H1 (cell line): ENCODE measurements at regions of chr9 and their contacts with region 1.

Region 1: GRCh38 chr9:69307446-69308216 is 17.4 kb upstream of the ENTREP1 start:
- DNase-seq: peak; percentile 58 to 62
- H3K4me3 ChIP-seq: peak overlapping the region in 1 of 4 experiments; percentile 19; a peak in 1 of 8 replicates
- H3K27ac ChIP-seq: peak overlapping the region; percentile 89
- H3K4me1 ChIP-seq: peaks cover 2 to 9% (median 6%) of the 10 kb centered on the region in 4 experiments; a peak in 5 of 7 replicates
- H3K27me3 ChIP-seq: no peaks in the 10 kb centered on the region
- CTCF ChIP-seq: peak in 1 of 3 experiments; percentile 16; a peak in 1 of 4 replicates
- EP300 ChIP-seq: peak in 1 of 2 experiments; percentile 94; a peak in 1 of 3 replicates
- POLR2A ChIP-seq: peak in 1 of 2 experiments; percentile 76; a peak in 2 of 3 replicates
- RAD21 ChIP-seq: peak in 1 of 2 experiments; percentile 3; a peak in 1 of 4 replicates

Region 2: DNA sequence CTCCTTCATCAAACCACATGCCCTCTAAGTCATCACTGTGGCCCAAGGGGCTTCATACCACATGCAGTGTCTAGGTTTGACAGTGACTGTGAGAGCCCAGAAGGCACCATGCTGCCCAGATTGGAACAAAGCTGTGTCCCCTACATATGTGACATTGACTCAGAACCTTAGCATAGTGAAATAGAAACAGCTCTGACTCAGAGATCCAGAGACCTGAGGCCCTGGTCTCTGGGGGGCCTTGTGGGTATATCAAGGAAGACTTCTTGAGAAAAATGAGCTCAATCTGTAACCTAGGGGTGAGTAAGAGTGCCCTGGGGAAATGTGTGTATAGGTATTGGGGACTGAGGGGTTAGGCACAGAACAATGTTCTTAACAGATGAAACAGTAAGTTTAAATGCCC is 10.3 kb after region 1 on chr9:
- CTCF ChIA-PET with region 1: interaction called, 24 read pairs
- POLR2A ChIA-PET with region 1: interaction called, 48 read pairs
- DNase-seq: no peak
- H3K4me3 ChIP-seq: no peak overlapping the region
- H3K27ac ChIP-seq: no peak overlapping the region
- H3K4me1 ChIP-seq: peaks cover 0 to 9% (median 6%) of the 10 kb centered on the region in 4 experiments; a peak in 4 of 7 replicates
- H3K27me3 ChIP-seq: no peaks in the 10 kb centered on the region
- CTCF ChIP-seq: no peak
- EP300 ChIP-seq: no peak
- POLR2A ChIP-seq: no peak
- RAD21 ChIP-seq: no peak

Region 3: GRCh38 chr9:69324549-69325401 is 17.1 kb after region 1 on chr9 and contains the start of gene ENTREP1:
- CTCF ChIA-PET with region 1: interaction called, 24 read pairs
- POLR2A ChIA-PET with region 1: interaction called, 48 read pairs
- DNase-seq: peak in 1 of 2 experiments; percentile 82
- H3K4me3 ChIP-seq: peak within 1 kb of the TSS; percentile 61 to 87 (median 68)
- H3K27ac ChIP-seq: no peak within 1 kb of the TSS
- H3K4me1 ChIP-seq: peaks cover 0 to 5% (median 4%) of the 10 kb centered on the region in 4 experiments; a peak in 5 of 7 replicates
- H3K27me3 ChIP-seq: peaks cover 0 to 17% (median 6%) of the 10 kb centered on the region in 4 experiments; a peak in 5 of 7 replicates
- CTCF ChIP-seq: 0 out of 4 replicates have a peak, but pooled peaks of 1 of the 3 experiments have one; percentile 3
- EP300 ChIP-seq: no peak
- POLR2A ChIP-seq: peak in 1 of 2 experiments; percentile 70; a peak in 2 of 3 replicates
- RAD21 ChIP-seq: peak in 1 of 2 experiments; percentile 3; a peak in 1 of 4 replicates
- total RNA-seq, gene ENTREP1: 22.8 and 25.0 TPM in 2 replicates

Region 4: DNA sequence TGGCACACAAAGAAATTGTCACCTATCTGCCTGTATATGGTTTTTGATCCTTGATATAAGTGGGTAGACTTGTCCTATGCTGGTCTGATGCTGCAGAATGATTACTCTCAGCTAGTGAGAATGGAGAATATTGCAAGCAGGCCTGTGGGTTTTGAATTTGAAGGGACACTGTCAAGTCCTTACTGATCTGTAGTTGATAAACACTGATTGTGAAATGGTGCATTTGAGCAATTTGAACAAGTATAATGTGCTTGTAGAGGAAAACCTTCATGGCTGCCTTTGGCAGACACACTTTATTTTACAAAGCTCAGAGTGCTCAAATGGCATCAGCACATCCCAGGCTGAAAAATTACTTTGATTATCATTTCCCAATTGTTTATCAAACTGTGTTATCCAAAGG is 26.7 kb after region 1 on chr9:
- CTCF ChIA-PET with region 1: interaction called, 4 read pairs
- POLR2A ChIA-PET with region 1: interaction called, 11 read pairs
- DNase-seq: no peak
- H3K4me3 ChIP-seq: no peak overlapping the region
- H3K27ac ChIP-seq: no peak overlapping the region
- H3K4me1 ChIP-seq: peaks cover 0 to 7% (median 2%) of the 10 kb centered on the region in 4 experiments; a peak in 3 of 7 replicates
- H3K27me3 ChIP-seq: no peaks in the 10 kb centered on the region
- CTCF ChIP-seq: no peak
- EP300 ChIP-seq: no peak
- POLR2A ChIP-seq: no peak
- RAD21 ChIP-seq: no peak

Region 5: DNA sequence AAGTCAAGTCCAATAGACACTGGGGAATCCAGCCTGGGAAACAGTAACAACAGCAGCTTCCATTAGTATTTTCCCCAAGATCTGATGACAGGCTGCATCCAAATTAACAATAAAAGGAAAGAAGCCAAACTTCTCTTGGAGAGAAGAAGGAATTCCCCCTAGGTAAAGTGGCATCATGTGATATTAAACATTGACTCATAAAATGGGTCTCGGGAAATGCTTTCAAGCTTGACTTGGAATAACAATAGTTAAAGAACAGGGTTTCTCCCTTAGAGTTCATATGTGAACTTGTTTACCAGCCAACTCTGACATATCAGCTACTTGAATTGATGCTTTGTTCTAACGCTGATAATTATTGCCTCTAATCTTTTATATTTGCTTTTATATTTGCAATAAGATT is 62.8 kb after region 1 on chr9:
- CTCF ChIA-PET with region 1: no interaction called
- POLR2A ChIA-PET with region 1: no interaction called
- DNase-seq: no peak
- H3K4me3 ChIP-seq: no peak overlapping the region
- H3K27ac ChIP-seq: no peak overlapping the region
- H3K4me1 ChIP-seq: no peaks in the 10 kb centered on the region
- H3K27me3 ChIP-seq: no peaks in the 10 kb centered on the region
- CTCF ChIP-seq: no peak
- EP300 ChIP-seq: no peak
- POLR2A ChIP-seq: no peak
- RAD21 ChIP-seq: no peak